ENCODE measurements at regions of chr10 and their contacts with region 1.

Region 1: DNA sequence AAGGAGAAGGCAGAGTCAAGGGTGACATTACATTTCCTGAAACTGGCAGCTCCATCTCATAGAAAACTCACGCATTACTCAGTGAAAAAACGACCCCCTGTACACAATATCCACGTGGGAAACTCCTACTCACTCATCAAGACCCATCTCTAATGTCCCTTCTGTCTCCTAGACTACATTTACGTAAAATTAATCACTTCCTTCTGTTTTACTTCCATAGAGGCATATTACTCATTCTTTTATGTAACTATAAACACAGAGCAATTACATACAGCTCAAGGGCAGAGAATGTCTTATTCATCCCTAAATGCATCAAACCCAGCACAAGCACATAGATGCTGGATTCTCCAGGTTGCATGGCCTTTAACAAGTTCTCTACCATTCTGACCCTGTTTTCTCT is 281.8 kb downstream of the KCNMA1 start:
- DNase-seq: no peak
- ATAC-seq: no peak
- H3K4me3 ChIP-seq: no peak overlapping the region
- H3K27ac ChIP-seq: no peak overlapping the region
- H3K4me1 ChIP-seq: peaks cover 0 to 4% of the 10 kb centered on the region in 2 donors
- H3K27me3 ChIP-seq: no peaks in the 10 kb centered on the region

Region 2: GRCh38 chr10:77319557-77319956 is 36.3 kb before region 1 on chr10:
- intact Hi-C with region 1: loop called in 1 of 2 experiments (anchors 5 kb)
- DNase-seq: peak in 1 of 2 donors; percentile 53
- ATAC-seq: peak; percentile 71
- H3K4me3 ChIP-seq: no peak overlapping the region
- H3K27ac ChIP-seq: no peak overlapping the region
- H3K4me1 ChIP-seq: peaks cover 0 to 7% of the 10 kb centered on the region in 2 donors
- H3K27me3 ChIP-seq: no peaks in the 10 kb centered on the region

Region 3: DNA sequence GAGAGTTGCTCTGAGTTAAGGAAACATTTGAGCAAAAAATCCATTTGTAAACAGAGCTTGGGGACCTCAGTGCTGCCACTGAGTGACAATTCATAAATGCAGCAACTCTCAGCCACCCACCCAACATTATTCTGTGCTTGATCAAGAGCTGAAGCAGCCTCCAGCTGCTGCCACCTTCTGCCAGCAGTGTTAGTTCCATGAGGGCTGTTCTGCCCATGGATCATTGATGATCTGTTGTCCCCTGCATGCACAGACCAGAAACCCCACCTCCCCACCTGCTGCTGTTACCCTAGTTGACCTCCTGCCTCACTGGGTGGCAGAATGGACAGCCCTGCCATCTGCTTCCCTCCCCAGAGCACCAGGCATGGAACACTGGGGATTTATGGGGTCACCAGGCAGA is 23.6 kb before region 1 on chr10:
- intact Hi-C with region 1: no loop called
- DNase-seq: no peak
- ATAC-seq: no peak
- H3K4me3 ChIP-seq: no peak overlapping the region
- H3K27ac ChIP-seq: no peak overlapping the region
- H3K4me1 ChIP-seq: peaks cover 7 to 8% of the 10 kb centered on the region in 2 donors
- H3K27me3 ChIP-seq: no peaks in the 10 kb centered on the region

Region 4: DNA sequence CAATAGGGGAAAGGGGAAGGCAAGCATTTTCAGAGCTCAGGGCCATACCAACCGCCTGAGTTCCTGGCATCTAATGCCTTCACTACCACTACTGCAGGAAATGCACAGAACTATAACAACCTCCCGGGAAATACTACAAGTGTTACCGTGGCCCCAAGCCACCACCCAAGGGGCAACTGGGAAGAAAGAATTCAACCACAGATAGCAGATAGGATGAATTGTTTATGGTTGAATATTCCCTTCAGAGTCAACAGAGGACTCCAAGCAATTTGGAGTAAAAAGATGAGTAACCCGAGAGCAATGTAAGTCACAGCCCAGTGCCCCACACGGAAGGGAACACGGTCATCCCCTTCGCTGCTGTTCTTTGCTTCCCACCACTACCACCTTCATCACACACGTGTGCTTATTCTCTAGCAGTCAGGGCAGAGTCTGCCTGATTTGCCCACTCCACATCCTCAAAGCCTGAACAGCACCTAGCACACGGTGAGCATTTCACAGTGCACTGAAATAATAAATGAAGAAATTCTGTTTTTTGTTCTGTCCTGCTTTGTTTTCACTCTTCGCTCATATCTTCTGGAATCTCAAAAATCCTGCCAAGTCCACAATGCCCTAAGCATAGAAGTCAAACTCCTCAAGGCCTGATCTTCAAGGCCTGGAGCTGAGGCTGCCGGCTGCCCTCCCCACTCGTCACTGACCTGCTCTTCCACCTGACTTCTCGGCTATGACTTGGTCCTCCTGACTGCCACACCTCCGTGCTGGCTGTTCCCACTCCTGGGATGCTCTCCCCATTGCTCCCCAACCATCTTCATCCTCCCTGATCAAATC is 60.7 kb after region 1 on chr10:
- intact Hi-C with region 1: loop called in 1 of 2 experiments (anchors 2 kb)
- DNase-seq: peak in 1 of 2 donors; percentile 76
- ATAC-seq: no peak
- H3K4me3 ChIP-seq: no peak overlapping the region
- H3K27ac ChIP-seq: peak overlapping the region; percentile 96 to 100
- H3K4me1 ChIP-seq: peaks cover 11 to 18% of the 10 kb centered on the region in 2 donors
- H3K27me3 ChIP-seq: no peaks in the 10 kb centered on the region